ENCODE measurements at regions of chr15 and their contacts with region 1.

Region 1: DNA sequence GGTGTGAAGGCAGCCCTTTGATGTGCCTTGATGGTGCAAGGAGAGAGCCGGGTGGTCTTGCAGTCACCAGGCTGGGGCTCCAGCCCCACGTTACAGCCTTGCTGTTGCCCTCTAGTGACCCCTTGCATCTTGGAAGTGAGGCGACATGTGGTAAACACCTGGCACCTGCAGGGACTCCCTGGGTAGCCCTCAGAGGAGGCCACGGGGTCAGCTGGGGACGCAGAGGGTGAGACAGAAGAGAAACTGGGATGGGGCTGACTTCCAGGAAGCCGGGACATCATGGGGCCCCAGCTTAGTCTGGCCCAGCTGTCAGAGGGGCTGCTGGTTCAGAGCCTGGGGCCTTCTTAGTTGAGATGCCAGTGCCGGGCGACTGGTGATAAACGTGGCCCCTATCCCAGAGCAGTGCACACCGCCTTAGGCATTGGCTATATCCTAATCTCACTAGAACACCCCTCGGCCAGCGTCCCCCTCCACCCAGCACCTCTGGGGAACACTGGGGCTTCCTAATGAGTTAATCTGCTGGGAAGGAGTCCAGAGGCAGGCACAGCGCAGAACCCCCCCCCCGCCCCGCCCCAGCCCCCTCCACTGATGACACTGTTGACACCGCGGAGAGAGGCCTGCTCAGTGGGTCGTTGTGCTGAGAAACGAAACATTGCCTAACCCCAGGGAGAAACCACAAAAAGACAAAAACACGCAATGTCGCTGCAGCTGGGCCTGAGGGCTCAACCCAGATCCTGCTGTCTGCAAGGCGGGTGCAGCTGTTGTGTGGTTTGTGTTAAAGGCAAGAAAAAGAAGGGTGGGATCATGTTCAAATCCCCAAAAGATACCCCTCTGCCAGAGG is 60.5 kb upstream of the KLF13 start:
- DNase-seq: peak; percentile 81
- ATAC-seq: peak; percentile 66
- H3K4me3 Mint-ChIP-seq: no peak overlapping the region
- H3K27ac Mint-ChIP-seq: peak overlapping the region; percentile 69
- H3K4me1 Mint-ChIP-seq: peaks cover 58% of the 10 kb centered on the region
- H3K27me3 Mint-ChIP-seq: peaks cover 3% of the 10 kb centered on the region
- CTCF ChIP-seq: no peak

Region 2: GRCh38 chr15:31326156-31326732 is 60.2 kb after region 1 on chr15:
- CTCF ChIA-PET with region 1: interaction called, 3 read pairs
- POLR2A ChIA-PET with region 1: interaction called, 11 read pairs
- intact Hi-C with region 1: no loop called
- DNase-seq: peak; percentile 99
- ATAC-seq: peak; percentile 86
- H3K4me3 Mint-ChIP-seq: peak overlapping the region; percentile 86
- H3K27ac Mint-ChIP-seq: peak overlapping the region; percentile 75
- H3K4me1 Mint-ChIP-seq: peaks cover 60% of the 10 kb centered on the region
- H3K27me3 Mint-ChIP-seq: no peaks in the 10 kb centered on the region
- CTCF ChIP-seq: no peak